AG04450 (cell line): ENCODE measurements at regions of chr5 and their contacts with region 1.

Region 1: GRCh38 chr5:39424736-39425637 is at the start of gene DAB2:
- DNase-seq: peak; percentile 93
- H3K4me3 ChIP-seq: peak within 1 kb of the TSS; percentile 85
- H3K27ac ChIP-seq: peak within 1 kb of the TSS; percentile 96
- H3K27me3 ChIP-seq: no peaks in the 10 kb centered on the region
- CTCF ChIP-seq: peak; percentile 74
- polyA plus RNA-seq, gene DAB2: 177 and 206 TPM in 2 replicates

Region 2: DNA sequence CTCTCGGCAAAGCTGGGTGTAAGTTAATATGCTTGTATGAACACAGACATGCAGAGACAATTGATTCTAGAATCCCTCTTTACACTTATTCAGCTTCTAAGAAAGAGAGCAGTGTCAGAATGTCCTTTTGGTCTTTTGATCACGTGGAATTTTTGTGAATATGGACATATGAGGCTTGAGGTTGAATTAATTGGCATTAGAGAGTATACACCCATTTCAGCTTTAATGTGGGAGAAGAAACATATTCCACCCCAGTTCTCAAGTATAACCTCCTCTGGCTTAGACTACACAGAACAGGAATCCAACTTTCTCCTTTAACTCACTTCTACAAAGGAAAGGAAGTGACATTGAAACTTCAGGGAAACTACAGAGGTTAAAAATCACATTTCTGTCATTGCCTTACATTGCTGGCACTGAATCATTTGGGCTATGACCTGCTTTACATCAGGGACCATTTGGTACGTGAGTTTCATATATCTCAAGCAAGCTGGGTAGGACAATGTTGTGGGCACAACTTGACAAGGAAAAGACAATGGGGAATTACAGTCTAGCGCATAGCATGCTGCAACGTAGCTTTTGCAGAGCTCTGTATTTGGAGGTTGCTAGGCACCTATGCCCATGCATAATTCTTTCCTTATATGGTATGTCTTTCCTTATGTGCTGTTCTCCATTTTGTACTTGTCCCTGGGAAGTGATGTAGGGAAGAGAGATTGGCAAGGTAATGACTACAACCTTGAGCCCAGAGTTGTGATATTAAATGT is 19.7 kb before region 1 on chr5:
- CTCF ChIA-PET with region 1: interaction called, 14 read pairs
- POLR2A ChIA-PET with region 1: interaction called, 26 read pairs
- DNase-seq: no peak
- H3K4me3 ChIP-seq: no peak overlapping the region
- H3K27ac ChIP-seq: no peak overlapping the region
- H3K27me3 ChIP-seq: no peaks in the 10 kb centered on the region
- CTCF ChIP-seq: no peak

Region 3: DNA sequence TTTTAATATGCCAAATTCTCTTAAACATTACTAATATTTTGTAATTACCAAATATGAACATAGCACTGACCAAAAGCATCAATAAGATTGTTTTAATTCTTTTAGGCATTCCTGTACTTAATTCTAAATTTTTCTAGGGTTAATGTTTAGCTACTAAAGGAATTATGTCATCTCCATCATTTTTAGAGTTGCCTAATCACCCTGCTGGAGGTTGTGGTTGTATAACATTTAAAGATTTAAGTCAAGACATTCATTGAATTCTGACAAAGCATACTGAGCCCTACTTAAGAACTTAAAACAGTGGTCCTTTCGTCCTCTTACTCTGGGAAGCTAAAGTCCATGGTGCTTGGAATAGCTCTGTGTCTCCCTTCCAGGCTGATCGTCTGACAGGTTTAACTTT is 27.9 kb after region 1 on chr5:
- CTCF ChIA-PET with region 1: interaction called, 16 read pairs
- POLR2A ChIA-PET with region 1: interaction called, 29 read pairs
- DNase-seq: peak; percentile 34
- H3K4me3 ChIP-seq: no peak overlapping the region
- H3K27ac ChIP-seq: peak overlapping the region; percentile 49
- H3K27me3 ChIP-seq: no peaks in the 10 kb centered on the region
- CTCF ChIP-seq: no peak

Region 4: GRCh38 chr5:39501397-39501796 is 76.4 kb after region 1 on chr5:
- CTCF ChIA-PET with region 1: interaction called, 8 read pairs
- POLR2A ChIA-PET with region 1: interaction called, 53 read pairs
- DNase-seq: no peak
- H3K4me3 ChIP-seq: no peak overlapping the region
- H3K27ac ChIP-seq: peak overlapping the region; percentile 80
- H3K27me3 ChIP-seq: no peaks in the 10 kb centered on the region
- CTCF ChIP-seq: no peak

Region 5: DNA sequence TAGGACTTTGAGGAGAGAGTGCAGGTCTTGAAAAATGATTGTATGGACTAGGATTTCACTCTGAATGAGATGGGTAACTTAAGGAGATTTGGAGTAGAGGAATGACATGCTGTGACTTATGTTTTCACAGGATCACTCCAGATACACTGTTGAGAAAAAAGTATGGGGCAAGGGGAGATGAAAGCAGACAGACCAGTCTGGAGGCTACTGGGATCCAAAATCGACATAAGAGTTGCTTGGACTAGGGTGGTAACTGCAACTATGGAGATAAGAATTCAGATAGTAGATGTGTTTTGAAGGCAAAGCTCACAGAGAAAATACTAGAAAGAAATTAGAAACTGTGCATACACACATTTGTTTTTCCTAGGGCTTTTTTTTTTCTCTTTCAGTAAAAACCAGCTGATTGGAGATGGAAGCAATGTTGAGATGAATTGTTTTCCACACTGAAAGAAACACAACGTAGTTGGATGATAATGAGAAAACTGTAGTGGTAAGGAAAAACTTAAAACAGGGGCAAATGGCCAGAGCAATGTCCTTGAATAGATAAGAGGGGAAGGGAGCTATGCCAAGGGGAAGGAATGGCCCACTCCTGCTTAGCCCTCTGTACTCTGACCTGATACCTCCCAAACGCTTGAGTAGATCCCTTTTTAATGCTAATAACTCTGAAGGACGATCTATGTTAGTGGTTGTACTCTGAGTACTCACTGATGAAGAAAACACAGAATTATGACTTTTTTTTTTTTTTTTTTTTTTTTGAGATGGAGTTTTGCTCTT is 114.3 kb after region 1 on chr5:
- CTCF ChIA-PET with region 1: interaction called, 14 read pairs
- POLR2A ChIA-PET with region 1: interaction called, 14 read pairs
- DNase-seq: no peak
- H3K4me3 ChIP-seq: no peak overlapping the region
- H3K27ac ChIP-seq: no peak overlapping the region
- H3K27me3 ChIP-seq: no peaks in the 10 kb centered on the region
- CTCF ChIP-seq: no peak